ENCODE measurements at regions of chr6 and their contacts with region 1.

Region 1: DNA sequence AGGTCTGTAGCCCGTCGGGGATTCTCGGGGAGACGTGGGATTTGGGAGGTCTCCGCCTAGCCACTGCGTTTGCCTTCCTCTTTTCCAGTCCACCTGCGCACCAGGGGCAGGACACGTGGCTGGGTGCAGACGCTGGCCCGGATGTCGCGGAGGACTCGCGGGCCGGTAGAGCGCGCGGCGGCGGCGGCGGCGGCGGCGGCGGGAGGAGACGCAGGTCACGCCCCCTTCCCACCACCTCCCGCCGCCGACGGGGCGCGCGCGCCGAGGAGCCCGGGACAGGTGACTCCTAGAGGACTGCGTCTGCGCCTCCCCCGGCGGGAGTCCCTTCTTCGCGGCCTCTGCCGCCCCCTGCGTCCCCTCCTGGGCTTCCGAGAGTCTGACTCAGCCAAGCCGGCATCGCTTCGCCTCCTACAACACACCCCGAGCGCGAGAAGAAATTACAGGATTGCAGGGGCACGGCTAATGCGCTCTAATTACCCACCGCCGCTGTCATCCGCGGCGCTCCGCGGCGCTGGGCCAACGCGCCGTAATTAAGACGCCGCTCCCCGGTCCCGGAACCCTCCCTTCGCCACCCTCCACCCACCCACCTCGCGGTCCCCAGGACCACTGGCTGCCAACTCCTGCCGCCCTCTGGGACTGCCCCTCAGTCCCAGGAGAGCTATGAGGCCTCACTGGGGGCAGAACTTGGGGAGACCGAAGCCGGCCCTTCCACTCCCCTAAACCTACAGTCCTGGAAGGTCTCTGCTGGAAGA is 124.5 kb downstream of the MRPL14 start:
- DNase-seq: peak; percentile 81
- H3K4me3 Mint-ChIP-seq: peak overlapping the region; percentile 89
- H3K27ac Mint-ChIP-seq: no peak overlapping the region
- H3K4me1 Mint-ChIP-seq: peaks cover 16% of the 10 kb centered on the region
- H3K27me3 Mint-ChIP-seq: peaks cover 27% of the 10 kb centered on the region

Region 2: GRCh38 chr6:42790549-42791181 is 1212.1 kb before region 1 on chr6:
- CTCF ChIA-PET with region 1: no interaction called
- intact Hi-C with region 1: no loop called
- DNase-seq: peak; percentile 36
- H3K4me3 Mint-ChIP-seq: no peak overlapping the region
- H3K27ac Mint-ChIP-seq: peak overlapping the region; percentile 2
- H3K4me1 Mint-ChIP-seq: peaks cover 19% of the 10 kb centered on the region
- H3K27me3 Mint-ChIP-seq: no peaks in the 10 kb centered on the region

Region 3: GRCh38 chr6:43667245-43668150 is 335.3 kb before region 1 on chr6:
- CTCF ChIA-PET with region 1: interaction called, 3 read pairs
- intact Hi-C with region 1: loop called (anchors 1 kb)
- DNase-seq: peak; percentile 90
- H3K4me3 Mint-ChIP-seq: peak overlapping the region; percentile 5
- H3K27ac Mint-ChIP-seq: peak overlapping the region; percentile 65
- H3K4me1 Mint-ChIP-seq: peaks cover 22% of the 10 kb centered on the region
- H3K27me3 Mint-ChIP-seq: no peaks in the 10 kb centered on the region

Region 4: DNA sequence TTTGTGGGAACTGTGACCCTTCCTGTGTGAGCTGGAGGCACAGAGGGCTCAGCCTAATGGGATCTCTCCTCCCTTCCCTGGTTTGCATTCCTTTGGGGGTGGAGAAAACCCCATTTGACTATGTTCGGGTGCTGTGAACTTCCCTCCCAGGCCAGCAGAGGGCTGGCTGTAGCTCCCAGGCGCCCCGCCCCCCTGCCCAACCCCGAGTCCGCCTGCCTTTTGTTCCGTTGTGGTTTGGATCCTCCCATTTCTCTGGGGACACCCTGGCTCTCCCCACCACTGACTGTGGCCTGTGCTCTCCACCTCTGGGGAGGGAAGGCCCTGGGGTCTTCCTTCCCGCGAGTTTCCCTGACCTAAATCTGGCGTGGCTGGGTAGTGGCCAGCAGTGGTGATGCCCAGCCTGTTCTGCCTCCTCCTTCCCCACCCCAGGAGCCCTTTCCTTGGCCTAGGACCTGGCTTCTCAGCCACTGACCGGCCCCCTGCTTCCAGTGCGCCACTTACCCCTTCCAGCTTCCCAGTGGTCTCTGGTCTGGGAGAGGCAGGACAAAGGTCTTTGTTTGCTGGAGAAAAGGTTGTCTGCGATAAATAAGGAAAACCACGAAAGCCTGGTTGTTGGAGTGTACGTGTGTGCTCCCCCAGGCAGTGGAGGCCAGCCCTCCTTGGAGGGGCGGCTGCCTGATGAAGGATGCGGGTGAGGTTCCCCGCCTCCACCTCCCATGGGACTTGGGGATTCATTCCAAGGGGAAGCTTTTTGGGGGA is 227.8 kb before region 1 on chr6:
- CTCF ChIA-PET with region 1: interaction called, 6 read pairs
- intact Hi-C with region 1: loop called (anchors 1 kb)
- DNase-seq: peak; percentile 73
- H3K4me3 Mint-ChIP-seq: peak overlapping the region; percentile 18
- H3K27ac Mint-ChIP-seq: no peak overlapping the region
- H3K4me1 Mint-ChIP-seq: peaks cover 29% of the 10 kb centered on the region
- H3K27me3 Mint-ChIP-seq: no peaks in the 10 kb centered on the region

Region 5: GRCh38 chr6:43900911-43901732 is 101.6 kb before region 1 on chr6:
- CTCF ChIA-PET with region 1: no interaction called
- intact Hi-C with region 1: no loop called
- DNase-seq: no peak
- H3K4me3 Mint-ChIP-seq: no peak overlapping the region
- H3K27ac Mint-ChIP-seq: no peak overlapping the region
- H3K4me1 Mint-ChIP-seq: no peaks in the 10 kb centered on the region
- H3K27me3 Mint-ChIP-seq: no peaks in the 10 kb centered on the region

Region 6: GRCh38 chr6:44062771-44063560 is 60.2 kb after region 1 on chr6:
- CTCF ChIA-PET with region 1: no interaction called
- intact Hi-C with region 1: loop called (anchors 2 kb)
- DNase-seq: peak; percentile 67
- H3K4me3 Mint-ChIP-seq: no peak overlapping the region
- H3K27ac Mint-ChIP-seq: peak overlapping the region; percentile 51
- H3K4me1 Mint-ChIP-seq: peaks cover 6% of the 10 kb centered on the region
- H3K27me3 Mint-ChIP-seq: peaks cover 2% of the 10 kb centered on the region

Measured in activated naive CD4-positive, alpha-beta T cell treated with anti-CD3 and anti-CD28 coated beads for 36 hours (primary cell).